PC-3 (cell line): ENCODE measurements at regions of chr10 and their contacts with region 1.

Region 1: GRCh38 chr10:96255549-96256331 is 15.6 kb downstream of the BLNK start:
- DNase-seq: no peak
- ATAC-seq: no peak
- H3K4me3 ChIP-seq: no peak overlapping the region
- H3K27ac ChIP-seq: no peak overlapping the region
- H3K4me1 ChIP-seq: no peaks in the 10 kb centered on the region
- H3K27me3 ChIP-seq: peaks cover 24% of the 10 kb centered on the region; the same call in 1 of the 2 replicates
- CTCF ChIP-seq: no peak

Region 2: DNA sequence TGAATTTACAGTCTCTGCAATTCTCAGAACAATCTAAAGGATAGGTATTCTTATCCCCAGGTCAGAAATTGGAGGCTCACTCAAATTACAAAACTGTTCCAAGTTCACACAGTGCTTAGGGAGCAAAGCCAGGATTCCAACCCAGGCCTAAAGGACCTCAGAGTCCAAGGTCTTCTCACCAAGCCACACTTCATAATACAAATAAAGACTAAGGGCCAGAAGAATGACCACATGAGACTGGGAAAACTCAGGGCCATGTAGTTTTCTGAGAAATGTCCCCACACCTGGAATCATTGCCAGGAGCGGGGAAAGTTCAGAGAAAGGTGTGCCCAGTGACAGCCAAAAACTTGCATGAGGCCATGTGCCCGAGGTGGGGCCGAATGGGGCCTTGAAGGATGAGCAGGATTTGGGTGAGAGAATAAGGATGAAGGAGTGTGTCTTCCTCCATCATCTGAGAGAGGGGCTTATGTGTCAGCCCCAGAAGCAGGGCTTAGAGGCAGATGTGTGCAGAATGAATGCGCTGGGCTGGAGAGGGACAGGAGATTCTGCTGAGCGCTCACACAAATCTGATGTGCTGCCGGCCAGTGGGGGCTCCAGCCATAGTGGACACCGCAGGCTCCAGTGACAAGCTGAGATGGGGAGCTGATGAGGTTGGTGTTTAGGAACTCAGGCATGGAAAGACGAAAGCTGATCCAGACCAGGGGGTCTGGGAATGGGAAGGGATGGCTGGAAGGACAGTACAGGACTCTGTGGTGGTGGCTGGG is 20.2 kb before region 1 on chr10:
- CTCF ChIA-PET with region 1: no interaction called
- POLR2A ChIA-PET with region 1: interaction called, 13 read pairs
- intact Hi-C with region 1: no loop called
- DNase-seq: no peak
- ATAC-seq: no peak
- H3K4me3 ChIP-seq: no peak overlapping the region
- H3K27ac ChIP-seq: no peak overlapping the region
- H3K4me1 ChIP-seq: no peaks in the 10 kb centered on the region
- H3K27me3 ChIP-seq: peaks cover 16% of the 10 kb centered on the region; the same call in 1 of the 2 replicates
- CTCF ChIP-seq: no peak